ENCODE measurements at regions of chr1 and their contacts with region 1.

Region 1: DNA sequence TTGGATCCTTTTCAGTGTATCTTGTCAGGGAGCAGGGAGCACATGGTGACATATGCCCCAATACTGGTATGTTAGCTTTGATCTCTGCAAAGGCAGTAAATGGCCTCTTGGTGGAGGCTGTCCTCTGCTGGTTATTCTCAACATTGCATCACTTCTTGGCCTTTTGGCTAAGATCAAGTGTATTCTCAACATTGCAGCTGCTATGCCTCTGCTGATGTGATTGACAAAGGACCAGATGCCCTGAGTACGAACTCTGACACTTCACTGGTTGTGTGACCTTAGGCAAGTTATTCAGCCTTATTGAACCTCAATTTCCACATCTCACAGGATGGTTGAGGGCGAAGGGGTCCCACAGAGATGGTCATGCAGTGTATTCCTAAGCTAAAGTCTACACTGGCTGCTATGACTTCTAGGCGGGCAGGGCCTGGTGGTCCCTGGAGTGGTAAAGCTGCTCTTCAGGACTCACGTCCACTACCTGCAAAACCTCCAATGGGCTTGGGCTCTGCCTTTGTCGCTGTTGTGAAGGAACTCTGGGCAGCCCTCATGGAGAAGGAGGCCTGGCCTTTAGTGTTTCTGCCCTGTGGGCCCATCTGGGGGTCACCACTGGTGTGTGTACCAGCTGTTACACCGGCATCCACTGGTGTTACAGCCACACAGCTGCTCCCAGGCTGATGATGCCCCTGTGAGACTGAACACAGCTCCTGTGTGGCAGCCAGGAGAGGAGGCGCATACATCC is 64.8 kb downstream of the DNTTIP2 start:
- DNase-seq: no peak
- ATAC-seq: peak; percentile 78
- H3K4me3 ChIP-seq: no peak overlapping the region
- H3K27ac ChIP-seq: no peak overlapping the region
- H3K4me1 ChIP-seq: peaks cover 1 to 3% of the 10 kb centered on the region in 2 donors
- H3K27me3 ChIP-seq: no peaks in the 10 kb centered on the region

Region 2: DNA sequence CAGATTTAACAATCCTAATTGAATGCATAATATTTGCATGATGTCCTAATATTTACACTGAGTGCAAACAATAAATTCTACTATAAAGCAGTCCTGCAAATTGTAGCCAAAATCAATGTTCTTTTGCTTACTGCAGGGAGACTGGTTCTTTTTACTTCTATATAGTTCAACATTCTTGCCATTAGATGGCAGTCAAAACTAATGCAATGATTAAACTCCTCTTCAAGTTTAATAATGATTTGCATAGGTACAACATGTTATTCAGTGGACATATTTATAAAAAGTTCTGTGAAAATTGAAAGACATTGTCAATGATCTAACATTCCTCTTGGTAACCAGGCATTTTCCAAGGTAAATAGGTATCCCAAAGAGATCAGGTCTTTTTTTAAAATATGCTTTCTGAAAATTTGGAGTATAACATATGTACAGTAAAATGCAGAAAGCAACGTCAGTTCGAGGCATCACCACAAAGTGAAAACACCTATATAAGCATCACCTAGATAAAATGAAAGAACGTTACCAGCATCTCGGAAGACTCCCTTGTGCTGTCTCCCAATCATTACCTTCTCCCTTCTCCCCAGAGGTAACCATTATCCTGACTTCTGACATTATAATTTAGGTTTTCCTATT is 376.1 kb before region 1 on chr1:
- intact Hi-C with region 1: loop called (anchors 5 to 10 kb)
- DNase-seq: no peak
- ATAC-seq: no peak
- H3K4me3 ChIP-seq: no peak overlapping the region
- H3K27ac ChIP-seq: no peak overlapping the region
- H3K4me1 ChIP-seq: no peaks in the 10 kb centered on the region
- H3K27me3 ChIP-seq: peaks cover 0 to 2% of the 10 kb centered on the region in 2 donors

Region 3: GRCh38 chr1:93447516-93448291 is 366.5 kb before region 1 on chr1 and contains the start of gene FNBP1L:
- intact Hi-C with region 1: loop called in 1 of 2 experiments (anchors 10 kb)
- DNase-seq: peak; percentile 73 to 88
- ATAC-seq: peak; percentile 93
- H3K4me3 ChIP-seq: peak within 1 kb of the TSS; percentile 82 to 93
- H3K27ac ChIP-seq: no peak within 1 kb of the TSS
- H3K4me1 ChIP-seq: no peaks in the 10 kb centered on the region
- H3K27me3 ChIP-seq: no peaks in the 10 kb centered on the region
- total RNA-seq, gene FNBP1L: 10.6 to 28.6 TPM

Region 4: GRCh38 chr1:93629099-93630059 is 184.8 kb before region 1 on chr1:
- intact Hi-C with region 1: loop called (anchors 1 to 2 kb)
- DNase-seq: no peak
- ATAC-seq: peak; percentile 80
- H3K4me3 ChIP-seq: no peak overlapping the region
- H3K27ac ChIP-seq: no peak overlapping the region
- H3K4me1 ChIP-seq: no peaks in the 10 kb centered on the region
- H3K27me3 ChIP-seq: no peaks in the 10 kb centered on the region

Region 5: GRCh38 chr1:93680757-93681550 is 133.3 kb before region 1 on chr1:
- intact Hi-C with region 1: loop called in 1 of 2 experiments (anchors 5 kb)
- DNase-seq: peak; percentile 86 to 92
- ATAC-seq: peak; percentile 91
- H3K4me3 ChIP-seq: peak overlapping the region; percentile 57 to 79
- H3K27ac ChIP-seq: peak overlapping the region; percentile 43 to 73
- H3K4me1 ChIP-seq: no peaks in the 10 kb centered on the region
- H3K27me3 ChIP-seq: no peaks in the 10 kb centered on the region

Region 6: DNA sequence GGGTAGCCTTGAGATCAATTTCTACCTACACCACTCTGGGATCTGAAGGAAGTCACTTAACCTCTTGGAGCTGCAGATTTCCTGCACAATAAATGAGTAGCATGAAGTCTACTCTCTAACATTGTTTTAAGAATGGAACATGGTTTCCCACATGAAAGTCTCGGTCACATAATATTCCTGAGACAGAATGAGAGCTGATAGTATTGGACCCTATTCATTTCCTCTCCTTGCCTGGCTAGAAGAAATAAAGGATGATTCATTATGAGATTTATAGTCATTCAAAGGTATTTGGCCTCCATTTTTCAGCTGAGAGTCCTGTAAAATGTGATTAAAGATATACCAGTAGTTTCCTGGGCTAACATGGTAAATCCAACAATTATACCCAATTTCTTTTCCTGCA is 366.4 kb after region 1 on chr1:
- intact Hi-C with region 1: no loop called
- DNase-seq: no peak
- ATAC-seq: no peak
- H3K4me3 ChIP-seq: no peak overlapping the region
- H3K27ac ChIP-seq: no peak overlapping the region
- H3K4me1 ChIP-seq: no peaks in the 10 kb centered on the region
- H3K27me3 ChIP-seq: no peaks in the 10 kb centered on the region

Region 7: GRCh38 chr1:94236013-94236491 is 421.8 kb after region 1 on chr1:
- intact Hi-C with region 1: no loop called
- DNase-seq: no peak
- ATAC-seq: peak; percentile 5
- H3K4me3 ChIP-seq: peak overlapping the region; percentile 30 to 60
- H3K27ac ChIP-seq: peak overlapping the region in 1 of 2 donors; percentile 73
- H3K4me1 ChIP-seq: peaks cover 0 to 3% of the 10 kb centered on the region in 2 donors
- H3K27me3 ChIP-seq: peaks cover 0 to 2% of the 10 kb centered on the region in 2 donors